IMR-90 (cell line): ENCODE measurements at regions of chr16 and their contacts with region 1.

Region 1: DNA sequence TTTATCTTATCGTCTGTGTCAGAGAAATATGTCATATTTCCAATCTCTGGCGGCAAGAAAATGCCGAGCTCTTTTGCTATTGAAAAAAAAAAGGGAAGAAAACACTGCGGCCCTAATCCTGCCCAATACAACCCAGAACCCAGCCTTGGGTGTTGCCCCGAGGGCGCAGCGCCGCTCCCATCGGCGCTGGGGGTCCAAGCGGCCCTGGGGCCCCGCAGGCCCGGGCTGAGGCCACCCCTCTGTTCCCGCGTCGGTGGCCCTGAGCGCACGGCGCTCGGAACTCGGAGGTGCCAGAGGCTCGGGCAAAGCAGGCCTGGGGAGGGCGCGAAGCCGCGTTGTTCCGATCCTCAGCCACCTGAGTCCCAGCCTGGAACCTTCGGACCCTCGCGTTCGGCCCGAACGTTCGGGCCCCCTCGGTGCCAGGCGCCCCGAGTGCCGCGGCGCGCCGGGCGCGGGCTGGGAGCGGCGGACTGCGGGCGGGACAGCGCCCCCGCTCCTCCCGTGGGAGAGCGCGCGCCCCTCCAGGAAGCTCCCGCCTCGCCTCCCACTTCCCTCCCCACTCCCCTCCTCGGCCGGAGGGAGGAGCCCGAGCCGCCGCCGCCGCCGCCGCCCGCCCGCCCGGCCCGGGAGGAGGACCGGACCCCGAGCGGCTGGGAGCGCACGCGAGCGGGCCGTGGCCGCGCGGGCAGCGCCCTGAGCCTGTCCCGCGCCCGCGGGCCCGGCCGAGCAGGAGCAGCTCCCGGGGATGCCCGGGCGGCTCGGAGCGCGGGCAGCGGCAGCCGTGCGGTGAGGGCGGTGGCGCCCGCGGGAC is at the start of gene CPNE2:
- DNase-seq: peak; percentile 34
- ATAC-seq: peak; percentile 93
- H3K4me3 ChIP-seq: peak within 1 kb of the TSS; percentile 96
- H3K27ac ChIP-seq: peak within 1 kb of the TSS; percentile 52; the same call in 1 of the 2 replicates
- H3K4me1 ChIP-seq: peaks cover 4% of the 10 kb centered on the region; the same call in 1 of the 2 replicates
- H3K27me3 ChIP-seq: peaks cover 9% of the 10 kb centered on the region; the same call in 1 of the 2 replicates
- CTCF ChIP-seq: 0 out of 2 replicates have a peak, but pooled peaks have one; percentile 15
- POLR2A ChIP-seq: no peak
- RAD21 ChIP-seq: no peak; the same call in 1 of the 2 replicates
- total RNA-seq, gene CPNE2: 9.2 and 15.4 TPM in 2 replicates

Region 2: GRCh38 chr16:56848056-56848936 is 243.9 kb before region 1 on chr16:
- CTCF ChIA-PET with region 1: no interaction called
- POLR2A ChIA-PET with region 1: no interaction called
- dilution Hi-C with region 1: no loop called
- in situ Hi-C with region 1: no loop called
- intact Hi-C with region 1: no loop called
- DNase-seq: peak; percentile 79
- ATAC-seq: peak; percentile 22; the same call in 1 of the 2 replicates
- H3K4me3 ChIP-seq: no peak overlapping the region
- H3K27ac ChIP-seq: no peak overlapping the region
- H3K4me1 ChIP-seq: peaks cover 33% of the 10 kb centered on the region
- H3K27me3 ChIP-seq: no peaks in the 10 kb centered on the region
- CTCF ChIP-seq: no peak
- POLR2A ChIP-seq: no peak
- RAD21 ChIP-seq: no peak

Region 3: GRCh38 chr16:57115514-57116182 is 23.5 kb after region 1 on chr16:
- CTCF ChIA-PET with region 1: interaction called, 3 read pairs
- POLR2A ChIA-PET with region 1: interaction called, 16 read pairs
- dilution Hi-C with region 1: no loop called
- in situ Hi-C with region 1: no loop called
- intact Hi-C with region 1: no loop called
- DNase-seq: peak; percentile 28
- ATAC-seq: peak; percentile 66
- H3K4me3 ChIP-seq: no peak overlapping the region
- H3K27ac ChIP-seq: no peak overlapping the region
- H3K4me1 ChIP-seq: peaks cover 13% of the 10 kb centered on the region
- H3K27me3 ChIP-seq: no peaks in the 10 kb centered on the region
- CTCF ChIP-seq: no peak
- POLR2A ChIP-seq: no peak
- RAD21 ChIP-seq: no peak

Region 4: GRCh38 chr16:57141822-57142631 is 49.8 kb after region 1 on chr16:
- CTCF ChIA-PET with region 1: no interaction called
- POLR2A ChIA-PET with region 1: no interaction called
- dilution Hi-C with region 1: no loop called
- in situ Hi-C with region 1: no loop called
- intact Hi-C with region 1: no loop called
- DNase-seq: no peak
- ATAC-seq: no peak
- H3K4me3 ChIP-seq: no peak overlapping the region
- H3K27ac ChIP-seq: no peak overlapping the region
- H3K4me1 ChIP-seq: no peaks in the 10 kb centered on the region
- H3K27me3 ChIP-seq: no peaks in the 10 kb centered on the region
- CTCF ChIP-seq: no peak
- POLR2A ChIP-seq: no peak
- RAD21 ChIP-seq: no peak

Region 5: GRCh38 chr16:57167953-57168352 is 75.8 kb after region 1 on chr16:
- CTCF ChIA-PET with region 1: no interaction called
- POLR2A ChIA-PET with region 1: no interaction called
- dilution Hi-C with region 1: no loop called
- in situ Hi-C with region 1: loop called (anchors 5 kb)
- intact Hi-C with region 1: loop called (anchors 2 kb)
- DNase-seq: peak; percentile 83
- ATAC-seq: peak; percentile 69
- H3K4me3 ChIP-seq: no peak overlapping the region
- H3K27ac ChIP-seq: no peak overlapping the region
- H3K4me1 ChIP-seq: no peaks in the 10 kb centered on the region
- H3K27me3 ChIP-seq: no peaks in the 10 kb centered on the region
- CTCF ChIP-seq: peak; percentile 78
- POLR2A ChIP-seq: no peak
- RAD21 ChIP-seq: peak; percentile 89